ENCODE measurements at regions of chr15 and their contacts with region 1.

Region 1: GRCh38 chr15:59299929-59300617 is 72.6 kb downstream of the MYO1E start:
- DNase-seq: peak; percentile 87
- H3K4me3 ChIP-seq: no peak overlapping the region; the same call in 1 of the 2 replicates
- H3K27ac ChIP-seq: peak overlapping the region; percentile 62
- H3K27me3 ChIP-seq: no peaks in the 10 kb centered on the region
- CTCF ChIP-seq: no peak

Region 2: DNA sequence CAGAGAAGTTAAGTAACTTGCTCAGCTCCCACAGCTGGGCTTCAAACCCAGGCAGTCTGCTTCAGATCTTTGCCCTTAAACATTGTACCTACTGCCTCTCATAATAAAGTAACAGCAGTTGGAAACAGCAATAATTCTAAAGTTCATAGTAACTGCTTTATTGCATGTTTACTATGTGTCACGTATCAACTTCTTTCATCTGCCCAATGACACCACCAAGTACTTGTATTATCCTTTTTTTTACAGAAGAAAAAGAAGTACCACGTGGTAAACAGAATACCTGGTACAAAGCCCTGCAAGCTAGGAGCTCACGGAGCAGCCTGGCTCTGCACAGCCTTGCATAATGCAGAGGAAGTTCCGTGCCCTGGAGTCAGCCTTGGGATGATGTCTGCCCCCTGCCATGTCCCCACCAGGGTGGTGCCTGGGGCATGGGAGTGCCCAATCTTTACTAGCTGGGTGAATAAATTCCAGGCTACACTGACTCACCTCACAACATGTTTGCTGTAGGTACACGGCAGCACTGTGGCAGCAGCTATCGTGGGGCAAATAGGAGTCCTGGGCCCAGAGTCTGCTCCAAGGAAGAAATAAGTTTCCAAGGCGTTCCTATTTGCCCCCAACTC is 16.2 kb before region 1 on chr15:
- CTCF ChIA-PET with region 1: no interaction called
- POLR2A ChIA-PET with region 1: no interaction called
- DNase-seq: no peak
- H3K4me3 ChIP-seq: no peak overlapping the region
- H3K27ac ChIP-seq: no peak overlapping the region
- H3K27me3 ChIP-seq: no peaks in the 10 kb centered on the region
- CTCF ChIP-seq: no peak

Region 3: GRCh38 chr15:59360305-59360704 is 60.2 kb after region 1 on chr15:
- CTCF ChIA-PET with region 1: no interaction called
- POLR2A ChIA-PET with region 1: no interaction called
- DNase-seq: no peak
- H3K4me3 ChIP-seq: no peak overlapping the region
- H3K27ac ChIP-seq: no peak overlapping the region
- H3K27me3 ChIP-seq: no peaks in the 10 kb centered on the region
- CTCF ChIP-seq: peak; percentile 47

Region 4: GRCh38 chr15:59372352-59373211 is 72.5 kb after region 1 on chr15 and contains the start of gene MYO1E:
- CTCF ChIA-PET with region 1: no interaction called
- POLR2A ChIA-PET with region 1: interaction called, 10 read pairs
- DNase-seq: peak; percentile 94
- H3K4me3 ChIP-seq: peak within 1 kb of the TSS; percentile 81
- H3K27ac ChIP-seq: peak within 1 kb of the TSS; percentile 98
- H3K27me3 ChIP-seq: no peaks in the 10 kb centered on the region
- CTCF ChIP-seq: no peak
- polyA plus RNA-seq, gene MYO1E: 44.6 and 49.1 TPM in 2 replicates

Measured in AG04450 (cell line).